ENCODE measurements at regions of chr1 and their contacts with region 1.

Region 1: GRCh38 chr1:23539698-23540266 is 8.7 kb upstream of the E2F2 start:
- DNase-seq: peak; percentile 98
- H3K4me3 ChIP-seq: peak overlapping the region; percentile 13
- H3K27ac ChIP-seq: no peak overlapping the region
- H3K4me1 ChIP-seq: peaks cover 5% of the 10 kb centered on the region
- H3K27me3 ChIP-seq: no peaks in the 10 kb centered on the region
- CTCF ChIP-seq: peak; percentile 97

Region 2: GRCh38 chr1:22976461-22977243 is 563.1 kb before region 1 on chr1:
- CTCF ChIA-PET with region 1: interaction called, 4 read pairs
- POLR2A ChIA-PET with region 1: no interaction called
- intact Hi-C with region 1: loop called (anchors 2 kb)
- DNase-seq: peak; percentile 90
- H3K4me3 ChIP-seq: no peak overlapping the region
- H3K27ac ChIP-seq: no peak overlapping the region
- H3K4me1 ChIP-seq: peaks cover 16% of the 10 kb centered on the region
- H3K27me3 ChIP-seq: no peaks in the 10 kb centered on the region
- CTCF ChIP-seq: peak; percentile 94

Region 3: GRCh38 chr1:23463286-23463685 is 76.5 kb before region 1 on chr1:
- CTCF ChIA-PET with region 1: no interaction called
- POLR2A ChIA-PET with region 1: no interaction called
- intact Hi-C with region 1: no loop called
- DNase-seq: no peak
- H3K4me3 ChIP-seq: no peak overlapping the region
- H3K27ac ChIP-seq: no peak overlapping the region
- H3K4me1 ChIP-seq: no peaks in the 10 kb centered on the region
- H3K27me3 ChIP-seq: no peaks in the 10 kb centered on the region
- CTCF ChIP-seq: no peak

Region 4: GRCh38 chr1:23496490-23497181 is 43.1 kb before region 1 on chr1:
- CTCF ChIA-PET with region 1: interaction called, 59 read pairs
- POLR2A ChIA-PET with region 1: interaction called, 8 read pairs
- intact Hi-C with region 1: loop called (anchors 1 kb)
- DNase-seq: no peak
- H3K4me3 ChIP-seq: no peak overlapping the region
- H3K27ac ChIP-seq: no peak overlapping the region
- H3K4me1 ChIP-seq: no peaks in the 10 kb centered on the region
- H3K27me3 ChIP-seq: no peaks in the 10 kb centered on the region
- CTCF ChIP-seq: no peak

Region 5: GRCh38 chr1:23634842-23635651 is 95.3 kb after region 1 on chr1:
- CTCF ChIA-PET with region 1: interaction called, 72 read pairs
- POLR2A ChIA-PET with region 1: no interaction called
- intact Hi-C with region 1: loop called (anchors 1 kb)
- DNase-seq: peak; percentile 82
- H3K4me3 ChIP-seq: peak overlapping the region; percentile 48
- H3K27ac ChIP-seq: peak overlapping the region; percentile 35
- H3K4me1 ChIP-seq: peaks cover 21% of the 10 kb centered on the region
- H3K27me3 ChIP-seq: no peaks in the 10 kb centered on the region
- CTCF ChIP-seq: peak; percentile 90

Region 6: DNA sequence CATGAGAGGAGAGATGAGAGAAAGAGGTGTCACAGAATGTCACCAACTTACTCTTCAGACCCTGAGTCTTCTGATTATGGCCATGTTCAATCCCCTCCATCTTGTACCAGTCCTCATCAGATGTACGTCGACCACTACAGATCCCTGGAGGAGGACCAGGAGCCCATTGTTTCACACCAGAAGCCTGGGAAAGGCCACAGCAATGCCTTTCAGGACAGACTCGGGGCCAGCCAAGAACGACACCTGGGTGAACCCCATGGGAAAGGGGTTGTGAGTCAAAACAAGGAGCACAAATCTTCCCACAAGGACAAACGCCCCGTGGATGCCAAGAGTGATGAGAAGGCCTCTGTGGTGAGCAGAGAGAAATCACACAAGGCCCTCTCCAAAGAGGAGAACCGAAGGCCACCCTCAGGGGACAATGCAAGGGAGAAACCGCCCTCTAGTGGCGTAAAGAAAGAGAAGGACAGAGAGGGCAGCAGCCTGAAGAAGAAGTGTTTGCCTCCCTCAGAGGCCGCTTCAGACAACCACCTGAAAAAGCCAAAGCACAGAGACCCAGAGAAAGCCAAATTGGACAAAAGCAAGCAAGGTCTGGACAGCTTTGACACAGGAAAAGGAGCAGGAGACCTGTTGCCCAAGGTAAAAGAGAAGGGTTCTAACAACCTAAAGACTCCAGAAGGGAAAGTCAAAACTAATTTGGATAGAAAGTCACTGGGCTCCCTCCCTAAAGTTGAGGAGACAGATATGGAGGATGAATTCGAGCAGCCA is 211.4 kb after region 1 on chr1:
- CTCF ChIA-PET with region 1: interaction called, 14 read pairs
- POLR2A ChIA-PET with region 1: no interaction called
- intact Hi-C with region 1: loop called (anchors 2 kb)
- DNase-seq: peak; percentile 77
- H3K4me3 ChIP-seq: no peak overlapping the region
- H3K27ac ChIP-seq: no peak overlapping the region
- H3K4me1 ChIP-seq: no peaks in the 10 kb centered on the region
- H3K27me3 ChIP-seq: no peaks in the 10 kb centered on the region
- CTCF ChIP-seq: peak; percentile 78

Region 7: GRCh38 chr1:24111996-24112779 is 572.4 kb after region 1 on chr1 and contains the start of gene MYOM3:
- CTCF ChIA-PET with region 1: no interaction called
- POLR2A ChIA-PET with region 1: no interaction called
- intact Hi-C with region 1: no loop called
- DNase-seq: peak; percentile 58
- H3K4me3 ChIP-seq: peak within 1 kb of the TSS; percentile 9
- H3K27ac ChIP-seq: no peak within 1 kb of the TSS
- H3K4me1 ChIP-seq: no peaks in the 10 kb centered on the region
- H3K27me3 ChIP-seq: no peaks in the 10 kb centered on the region
- CTCF ChIP-seq: peak; percentile 61
- total RNA-seq, gene MYOM3: not detected in 2 replicates

Measured in A673 (cell line).